Naive thymus-derived CD4-positive, alpha-beta T cell (primary cell): ENCODE measurements at regions of chr13 and their contacts with region 1.

Region 1: DNA sequence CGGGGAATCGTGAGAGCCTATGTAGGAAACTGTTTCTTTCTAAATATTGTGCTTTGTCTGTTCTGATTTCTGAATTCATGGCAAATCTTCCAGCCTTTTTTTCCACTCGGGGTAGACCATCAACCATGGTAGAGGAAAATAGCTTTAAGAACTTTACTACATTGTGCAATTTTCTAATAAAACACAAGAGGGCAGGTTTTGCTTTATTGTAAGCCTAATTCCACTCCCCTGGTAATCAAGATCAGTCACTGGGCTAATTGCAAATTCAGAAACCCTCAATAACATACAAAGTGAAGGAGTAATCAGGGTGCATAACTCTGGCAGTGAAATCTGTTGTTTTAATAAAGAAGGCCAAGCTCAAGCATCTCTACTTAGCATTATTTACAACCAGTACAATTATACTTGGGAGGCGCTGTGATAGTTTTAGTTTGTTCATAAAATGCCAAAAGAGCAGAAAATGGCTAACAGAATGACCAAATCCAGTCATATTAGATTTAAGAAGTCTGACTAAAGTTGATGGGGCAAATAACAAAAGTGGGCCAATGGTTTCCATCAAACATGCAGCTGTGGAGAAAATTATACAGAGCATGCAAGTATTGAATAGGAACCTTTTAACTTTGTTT is 43.8 kb downstream of the DCT start:
- DNase-seq: peak in 7 of 9 donors; percentile 18 to 63 (median 50)
- ATAC-seq: peak; percentile 73
- H3K4me3 ChIP-seq: no peak overlapping the region
- H3K4me3 Mint-ChIP-seq: no peak overlapping the region
- H3K27ac ChIP-seq: no peak overlapping the region
- H3K27ac Mint-ChIP-seq: no peak overlapping the region
- H3K4me1 ChIP-seq: no peaks in the 10 kb centered on the region
- H3K4me1 Mint-ChIP-seq: peaks cover 0 to 16% (median 0%) of the 10 kb centered on the region in 7 donors
- H3K27me3 ChIP-seq: no peaks in the 10 kb centered on the region
- H3K27me3 Mint-ChIP-seq: peaks cover 0 to 3% (median 0%) of the 10 kb centered on the region in 5 donors

Region 2: GRCh38 chr13:94505730-94506129 is 70.0 kb after region 1 on chr13:
- CTCF ChIA-PET with region 1: interaction called, 5 read pairs
- POLR2A ChIA-PET with region 1: no interaction called
- intact Hi-C with region 1: loop called in 1 of 2 experiments (anchors 5 kb)
- DNase-seq: no peak
- ATAC-seq: no peak
- H3K4me3 ChIP-seq: no peak overlapping the region
- H3K4me3 Mint-ChIP-seq: no peak overlapping the region
- H3K27ac ChIP-seq: no peak overlapping the region
- H3K27ac Mint-ChIP-seq: no peak overlapping the region
- H3K4me1 ChIP-seq: peaks cover 3 to 18% of the 10 kb centered on the region in 2 donors
- H3K4me1 Mint-ChIP-seq: peaks cover 5 to 23% (median 21%) of the 10 kb centered on the region in 7 donors
- H3K27me3 ChIP-seq: no peaks in the 10 kb centered on the region
- H3K27me3 Mint-ChIP-seq: peaks cover 3 to 23% (median 6%) of the 10 kb centered on the region in 5 donors